Prostate gland (tissue), 2 donors: ENCODE measurements at regions of chr3 and their contacts with region 1.

Region 1: DNA sequence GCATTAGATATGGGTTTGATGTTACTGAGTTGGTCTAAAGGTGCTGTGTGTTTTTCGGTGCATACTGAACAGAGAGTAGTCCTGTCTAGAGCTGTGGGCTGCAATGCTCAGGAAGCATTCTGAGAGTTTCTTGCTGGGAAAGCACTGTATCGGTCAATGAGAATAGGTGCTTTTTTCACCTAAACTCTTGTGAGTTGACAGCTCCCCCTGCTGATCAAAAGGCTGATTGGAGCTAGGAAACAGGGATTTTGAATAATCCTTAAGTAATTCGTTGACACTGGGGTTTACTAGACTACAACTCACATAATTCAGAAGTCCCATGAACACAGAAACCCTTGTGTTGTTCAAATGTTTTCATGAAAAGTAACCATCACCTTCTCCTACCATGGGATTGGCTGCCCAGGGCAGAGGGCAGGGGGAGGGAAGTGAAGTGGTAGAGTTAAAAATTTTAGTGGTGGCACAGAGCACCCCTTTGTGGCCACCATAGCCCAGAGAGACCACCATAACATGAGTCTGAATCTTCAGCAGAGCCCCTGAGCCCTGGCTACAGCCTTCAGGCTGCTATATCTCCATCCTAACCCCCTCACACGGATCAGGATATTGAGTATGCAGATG is 13.0 kb upstream of the MANF start:
- DNase-seq: peak; percentile 56
- H3K4me3 ChIP-seq: no peak overlapping the region
- H3K27ac ChIP-seq: no peak overlapping the region
- H3K4me1 ChIP-seq: no peaks in the 10 kb centered on the region
- H3K27me3 ChIP-seq: no peaks in the 10 kb centered on the region
- CTCF ChIP-seq: peak; percentile 33 to 84 (median 76)
- POLR2A ChIP-seq: no peak

Region 2: GRCh38 chr3:50674349-50675178 is 697.5 kb before region 1 on chr3 and contains the start of gene DOCK3:
- intact Hi-C with region 1: loop called (anchors 5 kb)
- DNase-seq: peak; percentile 28
- H3K4me3 ChIP-seq: peak within 1 kb of the TSS; percentile 39 to 44
- H3K27ac ChIP-seq: no peak within 1 kb of the TSS
- H3K4me1 ChIP-seq: no peaks in the 10 kb centered on the region
- H3K27me3 ChIP-seq: no peaks in the 10 kb centered on the region
- CTCF ChIP-seq: peak in 1 of 4 experiments; percentile 4
- POLR2A ChIP-seq: no peak
- total RNA-seq, gene DOCK3: 0.36 to 6.3 TPM

Region 3: DNA sequence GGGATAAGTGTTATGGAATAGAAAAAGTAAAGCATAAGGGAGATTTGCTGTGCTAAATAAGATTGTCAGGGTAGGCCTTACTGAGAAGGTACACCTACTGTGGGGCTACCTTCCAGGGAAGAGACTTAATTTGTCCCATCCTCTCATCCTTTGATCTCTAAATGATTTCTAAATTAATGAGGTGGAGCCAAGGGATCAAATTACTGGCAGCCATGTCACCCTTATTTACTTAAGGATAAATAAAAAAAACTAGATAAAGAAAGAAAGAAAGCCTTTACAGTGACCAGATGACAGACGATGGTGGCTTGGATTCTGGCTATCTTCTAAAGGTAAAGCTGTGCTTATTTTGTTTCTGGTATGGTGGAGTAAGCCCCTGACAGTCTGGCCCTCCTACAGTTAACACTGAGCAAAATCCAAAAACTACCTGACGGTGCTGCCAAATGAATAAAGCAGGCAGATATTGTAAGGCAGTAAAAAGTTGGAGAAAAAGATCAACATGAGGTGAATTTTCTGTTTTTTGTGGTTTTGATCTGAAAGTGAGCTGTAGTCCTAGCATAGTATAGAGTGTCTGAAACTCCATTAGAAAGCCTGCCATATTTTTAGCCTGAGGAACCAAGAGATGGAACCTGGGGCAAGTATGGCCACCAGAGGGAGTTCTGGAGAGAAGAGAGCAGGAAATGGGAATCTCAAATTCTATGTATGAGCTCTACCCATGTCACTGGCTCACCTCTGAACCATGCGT is 272.1 kb before region 1 on chr3:
- intact Hi-C with region 1: loop called (anchors 5 kb)
- DNase-seq: peak; percentile 45
- H3K4me3 ChIP-seq: no peak overlapping the region
- H3K27ac ChIP-seq: no peak overlapping the region
- H3K4me1 ChIP-seq: no peaks in the 10 kb centered on the region
- H3K27me3 ChIP-seq: no peaks in the 10 kb centered on the region
- CTCF ChIP-seq: peak; percentile 21 to 70 (median 53)
- POLR2A ChIP-seq: no peak

Region 4: DNA sequence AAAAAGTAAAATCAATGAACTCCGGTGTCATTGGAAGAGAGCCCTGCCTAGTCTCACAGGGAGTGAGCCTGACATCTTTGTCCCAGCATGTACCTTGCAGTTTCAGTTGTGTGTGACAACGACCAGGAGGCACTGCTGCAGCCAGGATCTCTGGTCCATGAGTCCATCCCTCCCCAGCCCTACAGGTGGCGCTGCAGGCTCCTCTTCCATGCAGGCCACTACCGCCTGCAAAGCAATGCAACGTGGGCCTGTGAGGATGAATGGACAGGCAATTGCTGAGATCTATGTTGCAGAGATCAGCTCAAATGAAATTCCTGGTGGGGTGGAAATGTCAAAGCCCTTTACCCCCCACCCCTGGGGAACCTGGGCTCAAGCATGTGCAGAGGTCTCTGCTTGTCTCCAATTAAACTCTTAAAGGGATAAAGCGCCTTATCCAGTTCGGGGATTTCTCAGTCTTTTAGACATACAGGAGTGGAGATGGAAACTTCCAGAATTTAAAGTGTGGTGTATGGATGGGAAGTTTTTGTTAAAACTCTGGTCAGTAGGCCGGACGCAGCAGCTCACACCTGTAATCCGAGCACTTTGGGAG is 1847.9 kb after region 1 on chr3:
- intact Hi-C with region 1: no loop called
- DNase-seq: peak; percentile 72
- H3K4me3 ChIP-seq: no peak overlapping the region
- H3K27ac ChIP-seq: no peak overlapping the region
- H3K4me1 ChIP-seq: no peaks in the 10 kb centered on the region
- H3K27me3 ChIP-seq: no peaks in the 10 kb centered on the region
- CTCF ChIP-seq: peak; percentile 42 to 88 (median 75)
- POLR2A ChIP-seq: no peak